HCT116 (cell line): ENCODE measurements at regions of chr3 and their contacts with region 1.

Region 1: GRCh38 chr3:187112934-187113793 is 26.1 kb downstream of the RPL39L start:
- DNase-seq: peak; percentile 18
- ATAC-seq: peak; percentile 87
- H3K4me3 ChIP-seq: no peak overlapping the region
- H3K27ac ChIP-seq: no peak overlapping the region
- H3K4me1 ChIP-seq: no peaks in the 10 kb centered on the region
- H3K27me3 ChIP-seq: 0 out of 2 replicates have a peak, but pooled peaks cover 6% of the 10 kb centered on the region
- CTCF ChIP-seq: peak; percentile 36 to 76 (median 64)
- POLR2A ChIP-seq: no peak
- RAD21 ChIP-seq: peak; percentile 75

Region 2: GRCh38 chr3:186425788-186426730 is 687.1 kb before region 1 on chr3:
- CTCF ChIA-PET with region 1: no interaction called
- POLR2A ChIA-PET with region 1: no interaction called
- RAD21 ChIA-PET with region 1: no interaction called
- intact Hi-C with region 1: no loop called
- DNase-seq: no peak
- ATAC-seq: peak; percentile 86
- H3K4me3 ChIP-seq: no peak overlapping the region
- H3K27ac ChIP-seq: no peak overlapping the region
- H3K4me1 ChIP-seq: no peaks in the 10 kb centered on the region
- H3K27me3 ChIP-seq: no peaks in the 10 kb centered on the region
- CTCF ChIP-seq: peak in 2 of 3 experiments; percentile 39 to 48; a peak in 4 of 6 replicates
- POLR2A ChIP-seq: no peak
- RAD21 ChIP-seq: no peak

Region 3: DNA sequence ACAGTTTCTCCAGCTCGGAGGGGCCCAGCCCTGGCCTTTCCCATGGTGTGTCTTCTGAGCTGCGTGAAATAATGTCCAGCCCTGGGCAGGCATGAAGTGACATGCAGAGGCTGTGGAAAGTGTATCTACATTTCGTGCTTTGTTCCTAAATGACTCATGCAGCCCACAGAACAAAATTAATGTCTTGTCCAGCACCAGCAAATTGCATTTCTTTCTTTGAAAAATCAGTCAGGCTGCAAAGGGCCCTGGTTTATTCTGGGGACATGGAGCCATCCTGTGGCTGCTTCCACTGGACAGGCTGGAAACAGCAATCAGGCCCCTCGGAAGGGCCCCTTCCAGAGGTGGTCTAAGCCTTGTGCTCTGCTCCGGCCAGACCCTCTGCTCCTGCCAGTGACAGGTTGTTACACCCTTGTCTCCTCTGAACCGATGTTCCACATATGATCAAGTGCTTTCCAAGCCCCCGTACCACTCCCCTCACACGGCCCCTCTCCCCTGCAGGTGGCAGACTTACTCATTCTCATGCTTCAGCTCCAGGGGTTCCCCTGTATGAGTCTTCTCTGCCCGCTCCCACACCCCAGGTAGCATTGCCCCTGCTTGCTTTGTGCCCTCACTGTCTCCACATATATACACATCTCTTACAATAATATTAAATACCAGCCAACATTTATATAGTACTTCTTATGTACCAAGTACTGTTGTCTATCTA is 602.6 kb before region 1 on chr3:
- CTCF ChIA-PET with region 1: no interaction called
- POLR2A ChIA-PET with region 1: no interaction called
- RAD21 ChIA-PET with region 1: no interaction called
- intact Hi-C with region 1: no loop called
- DNase-seq: no peak
- ATAC-seq: no peak
- H3K4me3 ChIP-seq: no peak overlapping the region
- H3K27ac ChIP-seq: no peak overlapping the region
- H3K4me1 ChIP-seq: no peaks in the 10 kb centered on the region
- H3K27me3 ChIP-seq: peaks cover 39% of the 10 kb centered on the region
- CTCF ChIP-seq: no peak
- POLR2A ChIP-seq: no peak
- RAD21 ChIP-seq: no peak

Region 4: GRCh38 chr3:187101184-187102072 is 11.7 kb before region 1 on chr3:
- CTCF ChIA-PET with region 1: interaction called, 13 read pairs
- POLR2A ChIA-PET with region 1: interaction called, 3 read pairs
- RAD21 ChIA-PET with region 1: no interaction called
- intact Hi-C with region 1: no loop called
- DNase-seq: no peak
- ATAC-seq: peak; percentile 63
- H3K4me3 ChIP-seq: peak overlapping the region in 1 of 2 experiments; percentile 25; a peak in 1 of 4 replicates
- H3K27ac ChIP-seq: no peak overlapping the region
- H3K4me1 ChIP-seq: peaks cover 6 to 8% of the 10 kb centered on the region in 2 experiments; a peak in 3 of 4 replicates
- H3K27me3 ChIP-seq: no peaks in the 10 kb centered on the region
- CTCF ChIP-seq: no peak
- POLR2A ChIP-seq: no peak
- RAD21 ChIP-seq: no peak

Region 5: DNA sequence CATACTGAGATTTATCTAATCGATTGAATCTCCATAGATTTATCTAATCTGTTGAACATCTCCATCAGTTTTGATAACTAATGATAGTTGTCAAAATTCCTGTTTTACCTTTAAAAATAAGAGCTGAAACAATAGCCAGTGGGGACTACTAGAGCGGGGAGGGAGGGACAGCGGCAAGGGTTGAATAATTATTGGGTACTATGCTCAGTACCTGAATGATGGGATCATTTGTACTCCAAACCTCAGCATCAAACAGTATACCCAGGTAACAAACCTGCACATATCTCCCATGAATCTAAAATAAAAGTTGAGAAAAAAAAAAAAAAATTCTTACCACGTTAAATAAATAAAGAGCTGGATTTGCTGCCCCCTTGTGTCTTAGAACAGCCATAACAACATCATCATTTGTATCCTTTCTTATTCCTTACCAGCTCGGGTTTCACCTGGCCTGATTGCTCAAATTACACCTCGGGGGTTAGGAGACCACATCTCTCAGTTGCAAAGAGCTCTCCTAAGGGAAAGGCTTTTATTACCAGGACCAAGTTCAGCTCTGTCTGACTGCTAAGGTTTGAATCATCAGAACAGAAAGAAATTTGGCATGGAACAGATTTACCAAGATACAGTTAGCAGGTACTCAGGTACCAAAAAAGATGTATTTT is 51.9 kb after region 1 on chr3:
- CTCF ChIA-PET with region 1: interaction called, 52 read pairs
- POLR2A ChIA-PET with region 1: interaction called, 8 read pairs
- RAD21 ChIA-PET with region 1: interaction called in 1 of 2 experiments, 12 read pairs
- intact Hi-C with region 1: loop called (anchors 1 kb)
- DNase-seq: peak; percentile 45
- ATAC-seq: peak; percentile 90
- H3K4me3 ChIP-seq: no peak overlapping the region
- H3K27ac ChIP-seq: no peak overlapping the region
- H3K4me1 ChIP-seq: peaks cover 0 to 2% of the 10 kb centered on the region in 2 experiments; a peak in 1 of 4 replicates
- H3K27me3 ChIP-seq: no peaks in the 10 kb centered on the region
- CTCF ChIP-seq: peak; percentile 49 to 86 (median 67)
- POLR2A ChIP-seq: no peak
- RAD21 ChIP-seq: peak; percentile 78

Region 6: GRCh38 chr3:187264021-187264420 is 150.9 kb after region 1 on chr3:
- CTCF ChIA-PET with region 1: no interaction called
- POLR2A ChIA-PET with region 1: no interaction called
- RAD21 ChIA-PET with region 1: no interaction called
- intact Hi-C with region 1: no loop called
- DNase-seq: no peak
- ATAC-seq: no peak
- H3K4me3 ChIP-seq: no peak overlapping the region
- H3K27ac ChIP-seq: no peak overlapping the region
- H3K4me1 ChIP-seq: no peaks in the 10 kb centered on the region
- H3K27me3 ChIP-seq: 0 out of 2 replicates have a peak, but pooled peaks cover 6% of the 10 kb centered on the region
- CTCF ChIP-seq: no peak
- POLR2A ChIP-seq: no peak
- RAD21 ChIP-seq: no peak

Region 7: GRCh38 chr3:187714404-187714979 is 601.3 kb after region 1 on chr3:
- CTCF ChIA-PET with region 1: no interaction called
- POLR2A ChIA-PET with region 1: no interaction called
- RAD21 ChIA-PET with region 1: no interaction called
- intact Hi-C with region 1: loop called (anchors 1 kb)
- DNase-seq: peak; percentile 72
- ATAC-seq: peak; percentile 96
- H3K4me3 ChIP-seq: no peak overlapping the region
- H3K27ac ChIP-seq: no peak overlapping the region
- H3K4me1 ChIP-seq: peaks cover 3% of the 10 kb centered on the region in 2 experiments; a peak in 2 of 4 replicates
- H3K27me3 ChIP-seq: no peaks in the 10 kb centered on the region
- CTCF ChIP-seq: peak; percentile 85 to 95 (median 93)
- POLR2A ChIP-seq: no peak
- RAD21 ChIP-seq: peak; percentile 97